HCT116 (cell line): ENCODE measurements at regions of chr1 and their contacts with region 1.

Region 1: GRCh38 chr1:247390116-247390791 is 25.7 kb upstream of the NLRP3 start:
- DNase-seq: peak; percentile 57
- ATAC-seq: peak; percentile 99
- H3K4me3 ChIP-seq: no peak overlapping the region
- H3K27ac ChIP-seq: no peak overlapping the region
- H3K4me1 ChIP-seq: no peaks in the 10 kb centered on the region
- H3K27me3 ChIP-seq: no peaks in the 10 kb centered on the region
- CTCF ChIP-seq: peak; percentile 72 to 93 (median 87)
- POLR2A ChIP-seq: no peak
- RAD21 ChIP-seq: peak; percentile 70

Region 2: GRCh38 chr1:247373721-247374141 is 16.5 kb before region 1 on chr1:
- CTCF ChIA-PET with region 1: interaction called, 16 read pairs
- POLR2A ChIA-PET with region 1: no interaction called
- RAD21 ChIA-PET with region 1: interaction called in 1 of 2 experiments, 3 read pairs
- intact Hi-C with region 1: loop called (anchors 1 kb)
- DNase-seq: no peak
- ATAC-seq: peak; percentile 52
- H3K4me3 ChIP-seq: no peak overlapping the region
- H3K27ac ChIP-seq: no peak overlapping the region
- H3K4me1 ChIP-seq: no peaks in the 10 kb centered on the region; a peak in 1 of 4 replicates
- H3K27me3 ChIP-seq: no peaks in the 10 kb centered on the region
- CTCF ChIP-seq: peak in 2 of 3 experiments; percentile 44 to 47; a peak in 4 of 6 replicates
- POLR2A ChIP-seq: no peak
- RAD21 ChIP-seq: no peak

Region 3: DNA sequence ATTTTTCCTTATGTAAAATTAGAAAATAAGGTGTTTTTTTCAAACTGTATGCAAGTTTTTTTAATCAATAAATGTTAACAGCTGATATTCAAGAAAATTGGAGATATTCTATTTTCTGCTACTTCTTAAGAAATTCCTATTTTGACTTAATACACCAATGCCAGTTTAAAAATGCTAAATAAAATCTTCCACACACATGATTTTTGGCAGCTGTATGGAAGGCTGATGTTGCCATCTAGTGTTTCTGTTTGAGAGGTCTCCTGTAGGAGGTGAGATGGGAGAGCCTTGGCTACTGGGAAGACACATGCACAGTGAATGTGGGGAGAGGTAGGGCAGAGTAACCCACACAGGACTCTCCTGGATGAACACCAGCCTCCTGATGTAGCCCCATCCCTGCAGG is 96.8 kb after region 1 on chr1:
- CTCF ChIA-PET with region 1: interaction called, 5 read pairs
- POLR2A ChIA-PET with region 1: no interaction called
- RAD21 ChIA-PET with region 1: no interaction called
- intact Hi-C with region 1: loop called (anchors 1 kb)
- DNase-seq: peak; percentile 26
- ATAC-seq: peak; percentile 91
- H3K4me3 ChIP-seq: no peak overlapping the region
- H3K27ac ChIP-seq: no peak overlapping the region
- H3K4me1 ChIP-seq: no peaks in the 10 kb centered on the region
- H3K27me3 ChIP-seq: peaks cover 14% of the 10 kb centered on the region; the same call in 1 of the 2 replicates
- CTCF ChIP-seq: peak; percentile 45 to 51 (median 50); a peak in 5 of 6 replicates
- POLR2A ChIP-seq: no peak
- RAD21 ChIP-seq: peak; percentile 77

Region 4: DNA sequence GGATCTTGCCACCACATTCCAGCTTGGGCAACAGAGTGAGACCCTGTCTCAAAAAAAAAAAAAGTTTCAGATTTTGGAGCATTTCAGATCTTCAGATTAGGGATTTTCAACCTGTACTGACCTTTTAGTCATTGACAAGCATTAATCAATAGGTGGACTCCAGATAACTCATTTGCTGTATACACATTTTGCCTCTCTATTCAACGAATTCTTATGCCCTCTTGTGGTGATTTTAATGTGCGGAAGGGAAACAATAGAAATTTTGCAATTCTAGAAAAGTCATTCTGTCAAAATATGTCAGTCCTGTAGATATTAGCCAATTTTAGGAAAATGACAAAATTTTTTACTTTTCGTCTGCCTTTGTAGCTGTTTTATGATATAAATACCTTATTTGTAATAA is 186.2 kb after region 1 on chr1:
- CTCF ChIA-PET with region 1: no interaction called
- POLR2A ChIA-PET with region 1: no interaction called
- RAD21 ChIA-PET with region 1: no interaction called
- intact Hi-C with region 1: loop called (anchors 1 kb)
- DNase-seq: peak; percentile 4
- ATAC-seq: no peak
- H3K4me3 ChIP-seq: no peak overlapping the region
- H3K27ac ChIP-seq: no peak overlapping the region
- H3K4me1 ChIP-seq: no peaks in the 10 kb centered on the region
- H3K27me3 ChIP-seq: no peaks in the 10 kb centered on the region
- CTCF ChIP-seq: peak; percentile 29 to 49 (median 38); a peak in 4 of 6 replicates
- POLR2A ChIP-seq: no peak
- RAD21 ChIP-seq: peak; percentile 57